Activated CD4-positive, alpha-beta T cell treated with anti-CD3 and anti-CD28 coated beads, Interleukin-2, amount 10 ng/mL, durations not matched to agents 24 days and 14 days (primary cell): ENCODE measurements at regions of chr4 and their contacts with region 1.

Region 1: GRCh38 chr4:55321707-55322264 is 24.3 kb upstream of the SRD5A3 start:
- DNase-seq: peak; percentile 86
- H3K4me3 Mint-ChIP-seq: no peak overlapping the region
- H3K27ac Mint-ChIP-seq: no peak overlapping the region
- H3K4me1 Mint-ChIP-seq: peaks cover 17% of the 10 kb centered on the region
- H3K27me3 Mint-ChIP-seq: no peaks in the 10 kb centered on the region

Region 2: GRCh38 chr4:54322818-54323417 is 998.9 kb before region 1 on chr4:
- intact Hi-C with region 1: loop called (anchors 1 kb)
- DNase-seq: peak; percentile 86
- H3K4me3 Mint-ChIP-seq: no peak overlapping the region
- H3K27ac Mint-ChIP-seq: no peak overlapping the region
- H3K4me1 Mint-ChIP-seq: peaks cover 11% of the 10 kb centered on the region
- H3K27me3 Mint-ChIP-seq: no peaks in the 10 kb centered on the region

Region 3: DNA sequence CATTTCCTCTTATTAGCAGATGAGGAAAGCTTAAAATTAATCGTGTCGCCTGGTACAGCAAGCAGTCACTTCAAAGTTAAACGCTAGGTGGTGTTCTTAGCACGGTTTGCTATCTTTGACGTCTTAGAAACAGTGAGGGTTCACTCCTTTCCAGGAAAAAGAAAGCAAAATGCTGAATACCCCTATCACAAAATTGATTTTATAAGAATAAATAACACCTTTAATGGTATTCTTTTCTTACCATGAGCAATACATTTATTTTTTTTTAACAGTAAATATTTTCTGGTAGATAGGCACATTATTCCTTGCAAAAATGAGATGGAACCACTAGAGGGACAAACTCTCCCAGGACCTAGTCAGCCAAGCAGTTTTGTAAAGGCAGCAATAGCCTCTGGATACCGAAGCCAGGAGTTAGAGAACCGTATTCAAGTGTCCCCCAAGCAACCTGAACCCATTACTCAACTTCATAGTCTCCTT is 350.3 kb before region 1 on chr4:
- intact Hi-C with region 1: loop called (anchors 1 kb)
- DNase-seq: peak; percentile 61
- H3K4me3 Mint-ChIP-seq: no peak overlapping the region
- H3K27ac Mint-ChIP-seq: no peak overlapping the region
- H3K4me1 Mint-ChIP-seq: no peaks in the 10 kb centered on the region
- H3K27me3 Mint-ChIP-seq: no peaks in the 10 kb centered on the region

Region 4: GRCh38 chr4:55078987-55079386 is 242.8 kb before region 1 on chr4:
- intact Hi-C with region 1: loop called (anchors 5 kb)
- DNase-seq: no peak
- H3K4me3 Mint-ChIP-seq: no peak overlapping the region
- H3K27ac Mint-ChIP-seq: no peak overlapping the region
- H3K4me1 Mint-ChIP-seq: peaks cover 6% of the 10 kb centered on the region
- H3K27me3 Mint-ChIP-seq: no peaks in the 10 kb centered on the region

Region 5: DNA sequence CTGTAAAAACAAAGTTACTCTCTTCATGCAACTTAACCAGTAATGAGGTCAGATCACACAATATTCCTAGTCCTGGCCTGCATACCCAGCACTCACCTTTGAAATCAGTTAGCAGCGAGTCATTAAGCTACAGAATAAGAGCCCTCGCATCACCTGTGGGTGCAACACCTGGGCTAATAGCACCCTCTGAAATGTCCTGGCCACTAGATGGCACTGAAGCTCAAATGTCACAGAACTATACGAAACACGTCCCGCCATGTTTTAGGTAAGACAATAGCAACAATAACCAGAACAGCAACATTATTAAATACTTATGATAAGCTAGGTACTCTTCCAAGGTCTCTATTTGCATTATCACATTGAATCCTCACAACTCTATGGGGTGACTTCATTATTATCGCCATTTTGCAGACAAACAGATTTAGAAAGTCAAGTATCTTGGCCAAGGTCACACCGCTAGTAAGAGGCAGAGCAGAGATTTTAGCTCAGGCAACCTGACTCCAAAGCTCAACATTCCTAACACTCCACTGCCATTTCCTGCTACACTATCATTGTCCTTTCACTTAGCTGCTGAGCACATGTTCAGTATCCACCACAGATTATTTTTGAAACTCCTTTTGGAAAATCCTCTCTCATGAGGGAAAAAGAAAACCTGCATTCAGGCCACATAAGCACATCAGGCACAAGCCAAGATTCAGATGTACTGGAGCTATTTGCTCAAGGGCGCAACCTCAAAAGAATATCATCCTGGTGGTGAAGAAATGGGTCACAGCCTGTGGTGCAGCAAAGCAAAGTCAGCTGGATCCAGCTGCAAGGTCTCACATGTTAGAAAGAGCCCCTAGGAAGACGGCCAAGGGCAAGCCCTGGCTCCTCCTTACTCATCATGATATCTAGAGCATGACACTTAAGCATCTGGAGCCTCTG is 136.9 kb before region 1 on chr4:
- intact Hi-C with region 1: loop called (anchors 2 kb)
- DNase-seq: peak; percentile 65
- H3K4me3 Mint-ChIP-seq: no peak overlapping the region
- H3K27ac Mint-ChIP-seq: no peak overlapping the region
- H3K4me1 Mint-ChIP-seq: no peaks in the 10 kb centered on the region
- H3K27me3 Mint-ChIP-seq: peaks cover 4% of the 10 kb centered on the region

Region 6: GRCh38 chr4:55251342-55251741 is 70.4 kb before region 1 on chr4:
- intact Hi-C with region 1: no loop called
- DNase-seq: no peak
- H3K4me3 Mint-ChIP-seq: no peak overlapping the region
- H3K27ac Mint-ChIP-seq: no peak overlapping the region
- H3K4me1 Mint-ChIP-seq: no peaks in the 10 kb centered on the region
- H3K27me3 Mint-ChIP-seq: peaks cover 3% of the 10 kb centered on the region

Region 7: GRCh38 chr4:55336136-55337034 is 14.6 kb after region 1 on chr4:
- intact Hi-C with region 1: loop called (anchors 2 kb)
- DNase-seq: peak; percentile 52
- H3K4me3 Mint-ChIP-seq: peak overlapping the region; percentile 26
- H3K27ac Mint-ChIP-seq: peak overlapping the region; percentile 86
- H3K4me1 Mint-ChIP-seq: peaks cover 20% of the 10 kb centered on the region
- H3K27me3 Mint-ChIP-seq: no peaks in the 10 kb centered on the region

Region 8: GRCh38 chr4:55395529-55396307 is 73.9 kb after region 1 on chr4 and contains the start of gene TMEM165:
- intact Hi-C with region 1: no loop called
- DNase-seq: peak; percentile 97
- H3K4me3 Mint-ChIP-seq: peak within 1 kb of the TSS; percentile 100
- H3K27ac Mint-ChIP-seq: peak within 1 kb of the TSS; percentile 97
- H3K4me1 Mint-ChIP-seq: peaks cover 33% of the 10 kb centered on the region
- H3K27me3 Mint-ChIP-seq: no peaks in the 10 kb centered on the region
- total RNA-seq, gene TMEM165: 87.2 and 99.1 TPM in 2 replicates